Activated naive CD8-positive, alpha-beta T cell treated with anti-CD3 and anti-CD28 coated beads, Interleukin-2, amount 10 ng/mL, durations not matched to agents 7 days and 5 days (primary cell): ENCODE measurements at regions of chr9 and their contacts with region 1.

Region 1: GRCh38 chr9:120868676-120869359 is 8.2 kb downstream of the PHF19 start:
- DNase-seq: peak; percentile 98
- ATAC-seq: peak; percentile 92
- H3K4me3 Mint-ChIP-seq: peak overlapping the region; percentile 92
- H3K27ac Mint-ChIP-seq: peak overlapping the region; percentile 99
- H3K4me1 Mint-ChIP-seq: peaks cover 50% of the 10 kb centered on the region
- H3K27me3 Mint-ChIP-seq: no peaks in the 10 kb centered on the region

Region 2: DNA sequence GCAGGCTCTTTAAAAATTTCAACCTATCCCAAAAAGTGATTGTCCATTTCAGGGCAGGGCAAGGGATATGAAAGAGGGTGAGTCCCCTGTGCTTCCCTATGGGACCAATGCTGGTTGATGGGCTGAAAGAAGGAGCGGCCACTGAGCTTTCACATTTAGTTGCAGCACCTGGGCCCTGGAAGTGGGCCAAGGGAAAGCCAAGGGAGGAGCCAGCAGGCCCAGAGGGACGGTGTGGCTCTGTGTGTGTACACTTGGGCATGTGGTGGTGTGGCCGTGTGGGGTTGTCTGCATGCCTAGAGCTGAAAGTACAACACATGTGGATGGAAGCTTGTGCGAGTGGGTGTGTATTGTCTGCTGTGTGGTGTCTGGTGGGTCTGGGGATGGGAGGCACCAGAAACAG is 12.1 kb before region 1 on chr9:
- POLR2A ChIA-PET with region 1: interaction called, 13 read pairs
- DNase-seq: no peak
- ATAC-seq: no peak
- H3K4me3 Mint-ChIP-seq: no peak overlapping the region
- H3K27ac Mint-ChIP-seq: no peak overlapping the region
- H3K4me1 Mint-ChIP-seq: peaks cover 6% of the 10 kb centered on the region
- H3K27me3 Mint-ChIP-seq: no peaks in the 10 kb centered on the region

Region 3: DNA sequence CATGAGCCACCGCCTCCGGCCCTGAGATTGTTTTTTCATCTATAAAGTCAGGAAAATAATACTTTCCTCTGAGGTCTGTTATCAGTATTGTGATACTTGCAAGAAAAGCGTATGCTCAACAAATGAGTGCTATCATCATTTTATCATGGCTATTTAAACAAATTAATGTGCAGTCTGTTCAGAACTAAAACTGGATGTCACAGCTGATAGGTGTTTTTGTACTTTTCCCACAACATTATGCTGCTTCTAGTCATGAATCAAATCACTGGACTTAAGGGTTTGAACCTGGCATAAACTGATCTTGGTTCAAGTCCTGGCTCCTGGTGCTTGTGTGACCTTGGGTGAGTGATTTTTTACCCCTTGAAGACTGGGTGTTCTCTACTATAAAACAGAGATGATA is 29.6 kb after region 1 on chr9:
- POLR2A ChIA-PET with region 1: interaction called, 210 read pairs
- DNase-seq: no peak
- ATAC-seq: no peak
- H3K4me3 Mint-ChIP-seq: no peak overlapping the region
- H3K27ac Mint-ChIP-seq: peak overlapping the region; percentile 37
- H3K4me1 Mint-ChIP-seq: peaks cover 61% of the 10 kb centered on the region
- H3K27me3 Mint-ChIP-seq: no peaks in the 10 kb centered on the region